WTC11 (cell line): ENCODE measurements at regions of chr5 and their contacts with region 1.

Region 1: GRCh38 chr5:115575167-115576070 is 26.9 kb downstream of the TICAM2 start:
- DNase-seq: no peak
- ATAC-seq: no peak
- H3K4me3 Mint-ChIP-seq: no peak overlapping the region
- H3K27ac Mint-ChIP-seq: no peak overlapping the region
- H3K4me1 Mint-ChIP-seq: peaks cover 13% of the 10 kb centered on the region
- H3K27me3 Mint-ChIP-seq: no peaks in the 10 kb centered on the region
- CTCF ChIP-seq: no peak

Region 2: GRCh38 chr5:115296124-115297022 is 279.0 kb before region 1 on chr5 and contains the start of gene CCDC112:
- CTCF ChIA-PET with region 1: interaction called, 15 read pairs
- POLR2A ChIA-PET with region 1: no interaction called
- DNase-seq: peak; percentile 88
- ATAC-seq: peak; percentile 96
- H3K4me3 Mint-ChIP-seq: peak within 1 kb of the TSS; percentile 98
- H3K27ac Mint-ChIP-seq: peak within 1 kb of the TSS; percentile 92; the same call in 1 of the 2 replicates
- H3K4me1 Mint-ChIP-seq: peaks cover 16% of the 10 kb centered on the region
- H3K27me3 Mint-ChIP-seq: peaks cover 5% of the 10 kb centered on the region
- CTCF ChIP-seq: no peak
- total RNA-seq, gene CCDC112: 10.8 to 12.2 TPM (median 11.6 TPM) in 3 replicates

Region 3: DNA sequence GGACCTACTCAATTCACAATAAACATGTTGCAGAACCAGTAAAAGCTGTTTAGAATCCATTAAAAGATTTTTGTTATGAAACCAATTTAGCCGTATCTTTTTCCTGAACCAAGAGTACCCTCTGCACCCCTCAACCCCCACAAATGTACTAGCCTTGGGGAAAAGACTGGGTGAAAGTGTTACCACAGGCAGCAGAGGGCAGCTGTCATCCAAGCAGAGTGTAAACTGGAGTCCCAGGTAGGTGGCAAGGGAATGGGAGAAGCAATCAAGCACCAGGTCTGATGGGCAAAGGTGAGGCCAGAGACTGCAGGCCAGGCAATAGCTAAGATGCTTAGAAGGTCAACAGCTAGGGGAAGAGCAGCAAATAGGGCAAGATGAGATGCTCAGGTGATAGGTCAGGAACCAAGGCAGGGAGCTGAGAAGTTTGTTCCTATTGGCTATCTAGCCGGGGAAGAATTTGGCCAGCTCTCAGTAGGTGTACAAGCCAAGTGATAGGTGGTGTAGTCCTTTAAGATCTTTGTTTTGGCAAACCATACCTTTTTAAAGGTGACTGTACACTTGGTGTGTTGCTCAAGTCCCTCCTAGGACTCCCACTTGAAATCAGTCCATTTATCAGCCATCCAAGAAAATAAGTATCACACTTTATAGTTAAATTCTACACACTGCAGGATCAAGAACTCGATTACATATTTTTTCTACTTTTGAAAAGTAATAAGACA is 201.2 kb before region 1 on chr5:
- CTCF ChIA-PET with region 1: interaction called, 16 read pairs
- POLR2A ChIA-PET with region 1: no interaction called
- DNase-seq: no peak
- ATAC-seq: peak; percentile 19
- H3K4me3 Mint-ChIP-seq: no peak overlapping the region
- H3K27ac Mint-ChIP-seq: no peak overlapping the region
- H3K4me1 Mint-ChIP-seq: peaks cover 38% of the 10 kb centered on the region
- H3K27me3 Mint-ChIP-seq: no peaks in the 10 kb centered on the region
- CTCF ChIP-seq: no peak

Region 4: DNA sequence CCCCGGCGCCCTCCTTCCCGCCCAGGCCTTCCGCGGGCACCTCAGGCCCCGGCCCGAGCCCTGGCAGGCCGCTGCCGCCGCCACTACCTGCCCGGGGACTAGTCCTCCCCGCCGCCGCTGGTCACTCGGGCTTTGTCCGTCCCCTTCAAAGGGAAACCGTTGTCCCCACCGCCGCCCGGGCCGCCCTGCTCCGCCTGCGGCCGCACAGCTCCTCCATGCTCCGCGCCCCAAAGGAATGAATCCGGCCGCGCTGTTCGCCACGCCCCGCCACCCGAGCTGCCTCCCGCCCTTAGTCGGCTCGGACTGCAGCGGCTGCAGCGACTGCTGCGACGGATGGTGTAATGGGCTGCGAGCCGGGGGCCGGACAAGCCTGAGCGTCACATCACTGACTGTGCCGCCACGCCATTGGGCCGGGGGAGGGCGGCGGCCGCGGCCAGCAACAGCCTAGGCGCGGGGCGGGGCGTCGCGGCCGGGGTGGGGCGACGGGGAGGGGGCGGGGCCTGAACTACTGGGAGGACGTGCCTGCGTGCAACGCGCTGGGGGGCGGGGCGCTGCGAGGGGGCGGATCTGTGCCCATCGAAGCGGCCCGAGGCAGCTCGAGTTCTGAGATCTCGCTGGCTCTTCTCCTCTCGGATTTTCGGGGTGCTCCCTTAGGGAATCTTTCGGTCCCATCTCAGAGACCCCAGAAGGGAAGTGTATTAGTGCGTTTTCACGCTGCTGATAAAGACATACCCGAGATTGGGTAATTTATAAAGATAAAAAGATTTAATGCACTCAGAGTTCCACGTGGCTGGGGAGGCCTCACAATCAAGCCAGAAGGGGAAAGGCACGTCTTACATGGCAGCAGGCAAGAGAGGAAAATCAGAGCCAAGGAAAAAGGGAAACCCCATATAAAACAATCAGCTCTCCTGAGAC is 30.7 kb before region 1 on chr5 and contains the start of gene FEM1C:
- CTCF ChIA-PET with region 1: interaction called, 24 read pairs
- POLR2A ChIA-PET with region 1: interaction called, 3 read pairs
- DNase-seq: peak; percentile 96
- ATAC-seq: peak; percentile 96
- H3K4me3 Mint-ChIP-seq: peak within 1 kb of the TSS; percentile 93
- H3K27ac Mint-ChIP-seq: peak within 1 kb of the TSS; percentile 96
- H3K4me1 Mint-ChIP-seq: peaks cover 47% of the 10 kb centered on the region
- H3K27me3 Mint-ChIP-seq: peaks cover 6% of the 10 kb centered on the region
- CTCF ChIP-seq: no peak
- total RNA-seq, gene FEM1C: 12.1 to 13.6 TPM (median 12.4 TPM) in 3 replicates

Region 5: GRCh38 chr5:115565233-115565632 is 10.2 kb before region 1 on chr5:
- CTCF ChIA-PET with region 1: interaction called, 11 read pairs
- POLR2A ChIA-PET with region 1: no interaction called
- DNase-seq: no peak
- ATAC-seq: no peak
- H3K4me3 Mint-ChIP-seq: no peak overlapping the region
- H3K27ac Mint-ChIP-seq: no peak overlapping the region
- H3K4me1 Mint-ChIP-seq: no peaks in the 10 kb centered on the region
- H3K27me3 Mint-ChIP-seq: no peaks in the 10 kb centered on the region
- CTCF ChIP-seq: no peak